Heart right ventricle (tissue), 16 donors: ENCODE measurements at regions of chr11 and their contacts with region 1.

Region 1: GRCh38 chr11:112219476-112220232 is 6.6 kb upstream of the PTS start:
- DNase-seq: peak in 1 of 2 donors; percentile 54
- ATAC-seq: peak; percentile 83 to 95 (median 92)
- H3K4me3 ChIP-seq: no peak overlapping the region
- H3K27ac ChIP-seq: no peak overlapping the region
- H3K4me1 ChIP-seq: peaks cover 0 to 5% (median 0%) of the 10 kb centered on the region in 9 donors
- H3K27me3 ChIP-seq: no peaks in the 10 kb centered on the region
- CTCF ChIP-seq: peak; percentile 60 to 85 (median 81)

Region 2: GRCh38 chr11:112269139-112269538 is 49.5 kb after region 1 on chr11:
- intact Hi-C with region 1: no loop called
- DNase-seq: no peak
- ATAC-seq: no peak
- H3K4me3 ChIP-seq: no peak overlapping the region
- H3K27ac ChIP-seq: no peak overlapping the region
- H3K4me1 ChIP-seq: peaks cover 0 to 24% (median 0%) of the 10 kb centered on the region in 9 donors
- H3K27me3 ChIP-seq: no peaks in the 10 kb centered on the region
- CTCF ChIP-seq: no peak

Region 3: DNA sequence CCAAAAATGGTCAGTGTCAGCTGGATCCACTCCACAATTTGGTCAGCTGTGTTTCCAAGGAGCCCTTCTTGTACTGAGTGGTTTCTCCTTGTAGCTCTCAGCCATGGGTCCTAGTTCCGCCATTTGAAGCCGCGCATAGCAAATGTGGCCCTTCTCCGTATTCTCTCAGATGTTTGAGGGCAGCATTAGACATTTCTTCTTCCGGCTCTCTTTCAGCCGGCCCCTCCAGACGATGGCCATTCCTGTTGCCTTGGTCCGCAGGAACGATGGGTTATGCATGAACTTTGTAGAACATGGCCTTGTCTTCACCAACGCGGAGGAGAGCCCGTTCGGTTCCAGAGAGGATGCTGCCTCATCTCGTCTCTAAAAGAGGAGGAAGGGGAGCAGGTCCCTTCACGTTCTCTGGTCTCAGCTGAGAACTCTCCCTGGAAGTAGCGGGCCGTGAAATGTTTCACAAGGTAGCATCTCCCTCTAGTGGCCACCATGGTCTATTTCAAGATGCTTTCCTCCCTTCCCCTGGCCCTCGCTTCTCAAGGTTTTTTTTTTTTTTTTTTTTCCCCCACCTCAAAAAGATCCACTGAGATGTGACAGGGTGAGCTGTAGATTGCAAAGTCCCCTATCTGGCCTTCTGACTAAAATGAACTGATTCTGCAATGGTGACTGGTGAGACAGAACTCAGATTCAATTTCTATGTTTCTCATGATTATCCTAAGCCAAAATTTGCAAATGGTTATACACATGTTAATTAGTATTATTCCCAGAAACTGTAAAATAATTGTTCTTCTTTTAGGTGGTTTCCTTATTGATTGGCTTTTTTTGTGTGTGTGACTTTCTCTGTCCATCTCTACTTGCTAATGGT is 60.8 kb after region 1 on chr11:
- intact Hi-C with region 1: loop called (anchors 1 to 5 kb)
- DNase-seq: peak in 1 of 2 donors; percentile 70
- ATAC-seq: peak; percentile 81 to 96 (median 90)
- H3K4me3 ChIP-seq: peak overlapping the region; percentile 8 to 67 (median 54)
- H3K27ac ChIP-seq: peak overlapping the region in 6 of 10 donors; percentile 5 to 64 (median 38)
- H3K4me1 ChIP-seq: peaks cover 0 to 8% (median 5%) of the 10 kb centered on the region in 9 donors
- H3K27me3 ChIP-seq: no peaks in the 10 kb centered on the region
- CTCF ChIP-seq: peak; percentile 48 to 72 (median 66)

Region 4: DNA sequence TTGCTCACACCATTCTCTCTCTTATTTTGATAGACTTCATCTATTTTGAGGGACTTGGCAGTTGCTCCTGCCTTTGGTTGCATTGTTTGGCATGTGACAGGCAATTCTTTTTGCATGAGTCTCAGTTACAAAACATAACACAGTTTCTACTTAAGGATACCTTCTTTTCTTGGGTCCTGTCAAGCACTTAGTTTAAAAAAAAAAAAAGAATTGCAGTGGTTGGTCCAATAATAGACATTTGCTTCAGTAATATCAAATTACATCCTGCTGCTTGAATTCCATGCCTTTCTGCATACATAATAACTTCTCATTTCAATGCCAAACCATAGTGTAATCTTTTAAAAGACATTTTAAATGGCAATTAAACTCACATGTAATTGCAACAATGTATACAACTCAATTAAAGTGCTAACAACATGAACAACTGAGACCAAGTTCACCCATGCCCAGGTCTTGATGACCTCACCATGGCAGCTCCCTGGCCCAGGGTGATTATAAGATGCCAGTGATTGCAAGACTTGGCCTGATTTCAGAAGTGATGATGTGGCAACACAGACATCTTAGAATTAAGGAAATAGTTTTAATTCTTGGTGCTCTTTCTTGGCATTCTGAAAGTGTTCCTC is 73.2 kb after region 1 on chr11:
- intact Hi-C with region 1: no loop called
- DNase-seq: no peak
- ATAC-seq: peak in 3 of 8 donors; percentile 18 to 54 (median 41)
- H3K4me3 ChIP-seq: no peak overlapping the region
- H3K27ac ChIP-seq: peak overlapping the region; percentile 34 to 88 (median 78)
- H3K4me1 ChIP-seq: peaks cover 0 to 50% (median 19%) of the 10 kb centered on the region in 9 donors
- H3K27me3 ChIP-seq: no peaks in the 10 kb centered on the region
- CTCF ChIP-seq: no peak